ENCODE measurements at regions of chr10 and their contacts with region 1.

Region 1: DNA sequence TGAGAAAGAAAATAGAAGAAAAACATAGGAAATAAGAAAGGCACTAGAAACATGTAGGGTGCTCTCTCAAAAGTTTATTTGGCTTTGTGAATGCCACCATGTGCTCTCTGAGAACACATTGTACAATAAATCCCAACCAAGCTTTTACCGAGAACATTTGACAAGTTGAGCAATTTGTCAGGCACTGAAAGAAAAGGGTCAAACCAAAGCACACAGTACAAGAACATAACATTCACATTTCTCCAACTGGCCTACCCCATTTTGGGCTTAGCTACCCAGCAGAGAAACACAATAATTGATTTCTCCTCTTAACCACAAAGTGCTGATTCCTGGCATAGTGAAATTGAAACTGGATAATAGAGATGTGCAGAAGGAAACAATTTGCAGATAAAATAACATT is 69.2 kb upstream of the SLC39A12 start:
- DNase-seq: no peak

Region 2: DNA sequence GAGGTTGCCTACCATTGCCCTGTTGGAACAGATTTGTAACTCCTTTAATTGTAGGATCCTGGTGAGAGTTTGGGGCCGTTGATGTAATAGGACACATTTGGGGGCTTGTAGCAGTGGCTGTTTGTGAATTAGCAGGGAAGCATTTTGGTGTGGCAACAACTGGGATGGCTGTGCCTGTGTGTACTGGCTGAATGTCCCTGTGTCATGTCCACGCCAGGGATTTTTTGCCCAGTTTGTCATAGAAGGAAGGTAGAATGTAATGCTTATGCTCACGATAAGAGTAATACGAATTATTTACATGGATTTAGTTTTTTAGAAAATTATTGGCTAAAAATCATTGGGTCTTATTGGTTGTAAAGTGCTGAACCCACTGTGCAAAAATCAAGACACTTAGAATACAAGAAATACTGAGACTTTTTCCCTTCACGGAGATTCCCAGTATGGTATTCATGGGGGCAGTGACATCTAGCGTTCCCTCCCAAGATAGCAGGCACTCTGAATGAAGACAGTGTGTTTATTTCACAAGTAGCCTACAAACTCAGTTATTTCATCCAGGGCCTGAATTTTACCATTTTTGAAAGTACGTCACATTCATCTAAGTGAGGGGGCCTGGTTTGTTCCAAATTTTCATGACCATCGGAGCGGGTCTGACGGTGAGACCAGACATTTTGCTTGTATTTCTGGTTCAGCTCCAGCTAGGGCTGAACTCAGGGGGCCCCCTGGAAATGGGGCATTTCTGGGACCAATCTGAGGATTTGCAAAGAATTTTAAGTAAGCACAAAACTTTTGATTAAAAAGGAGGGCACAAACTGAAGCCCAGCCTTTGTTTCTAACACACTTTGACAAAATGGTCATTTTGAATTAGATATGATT is 332.4 kb after region 1 on chr10:
- in situ Hi-C with region 1: loop called (anchors 25 kb)
- DNase-seq: peak; percentile 82